ENCODE measurements at regions of chr7 and their contacts with region 1.

Region 1: GRCh38 chr7:31735991-31736982 is 49.3 kb downstream of the PPP1R17 start:
- DNase-seq: peak; percentile 57 to 69 (median 64)
- ATAC-seq: peak; percentile 90
- H3K4me3 ChIP-seq: no peak overlapping the region
- H3K27ac ChIP-seq: no peak overlapping the region
- H3K4me1 ChIP-seq: no peaks in the 10 kb centered on the region
- H3K27me3 ChIP-seq: no peaks in the 10 kb centered on the region; a peak in 2 of 5 replicates
- CTCF ChIP-seq: peak; percentile 72 to 87 (median 85)
- EP300 ChIP-seq: no peak
- POLR2A ChIP-seq: no peak
- RAD21 ChIP-seq: peak; percentile 72 to 76

Region 2: GRCh38 chr7:30983042-30983913 is 753.0 kb before region 1 on chr7:
- CTCF ChIA-PET with region 1: no interaction called
- POLR2A ChIA-PET with region 1: no interaction called
- in situ Hi-C with region 1: loop called (anchors 10 kb)
- intact Hi-C with region 1: no loop called
- DNase-seq: peak; percentile 80 to 87 (median 86)
- ATAC-seq: peak; percentile 96
- H3K4me3 ChIP-seq: no peak overlapping the region
- H3K27ac ChIP-seq: no peak overlapping the region
- H3K4me1 ChIP-seq: peaks cover 0 to 4% of the 10 kb centered on the region in 2 experiments; a peak in 1 of 5 replicates
- H3K27me3 ChIP-seq: peaks cover 37 to 61% of the 10 kb centered on the region in 2 experiments
- CTCF ChIP-seq: peak; percentile 87 to 94 (median 90)
- EP300 ChIP-seq: no peak
- POLR2A ChIP-seq: no peak
- RAD21 ChIP-seq: peak; percentile 68 to 93

Region 3: DNA sequence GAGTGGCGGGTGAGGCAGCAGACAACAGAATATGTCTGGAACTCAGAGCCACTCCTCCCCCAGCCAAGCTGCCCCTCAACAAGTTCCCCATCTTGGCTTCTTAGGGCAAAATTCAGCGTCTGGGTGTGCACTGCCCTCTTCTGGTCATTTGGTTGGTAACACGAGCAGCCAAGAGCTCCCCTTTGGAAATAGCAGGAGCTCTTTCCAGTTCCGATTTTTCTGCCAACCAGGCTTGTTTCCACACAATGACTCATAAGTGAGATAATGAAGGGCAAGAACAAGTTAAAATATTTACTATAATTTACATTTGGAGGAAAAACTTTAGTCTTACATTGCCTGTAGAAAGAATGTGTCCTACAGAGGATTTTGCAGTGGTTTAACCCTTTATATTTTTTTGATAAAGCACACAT is 613.6 kb before region 1 on chr7:
- CTCF ChIA-PET with region 1: interaction called, 3 read pairs
- POLR2A ChIA-PET with region 1: no interaction called
- in situ Hi-C with region 1: loop called (anchors 5 kb)
- intact Hi-C with region 1: no loop called
- DNase-seq: peak; percentile 59 to 77 (median 74)
- ATAC-seq: peak; percentile 94
- H3K4me3 ChIP-seq: no peak overlapping the region
- H3K27ac ChIP-seq: no peak overlapping the region
- H3K4me1 ChIP-seq: no peaks in the 10 kb centered on the region
- H3K27me3 ChIP-seq: peaks cover 0 to 7% of the 10 kb centered on the region in 2 experiments; a peak in 3 of 5 replicates
- CTCF ChIP-seq: peak; percentile 85 to 92 (median 86)
- EP300 ChIP-seq: no peak
- POLR2A ChIP-seq: no peak
- RAD21 ChIP-seq: peak; percentile 77 to 86

Region 4: GRCh38 chr7:31134246-31135188 is 601.8 kb before region 1 on chr7:
- CTCF ChIA-PET with region 1: interaction called, 8 read pairs
- POLR2A ChIA-PET with region 1: interaction called, 3 read pairs
- in situ Hi-C with region 1: loop called (anchors 5 kb)
- intact Hi-C with region 1: loop called (anchors 2 kb)
- DNase-seq: peak; percentile 69 to 82 (median 74)
- ATAC-seq: peak; percentile 99
- H3K4me3 ChIP-seq: no peak overlapping the region
- H3K27ac ChIP-seq: no peak overlapping the region
- H3K4me1 ChIP-seq: no peaks in the 10 kb centered on the region
- H3K27me3 ChIP-seq: peaks cover 0 to 4% of the 10 kb centered on the region in 2 experiments; a peak in 3 of 5 replicates
- CTCF ChIP-seq: peak; percentile 69 to 80 (median 78)
- EP300 ChIP-seq: no peak
- POLR2A ChIP-seq: no peak
- RAD21 ChIP-seq: peak; percentile 51 to 76

Region 5: DNA sequence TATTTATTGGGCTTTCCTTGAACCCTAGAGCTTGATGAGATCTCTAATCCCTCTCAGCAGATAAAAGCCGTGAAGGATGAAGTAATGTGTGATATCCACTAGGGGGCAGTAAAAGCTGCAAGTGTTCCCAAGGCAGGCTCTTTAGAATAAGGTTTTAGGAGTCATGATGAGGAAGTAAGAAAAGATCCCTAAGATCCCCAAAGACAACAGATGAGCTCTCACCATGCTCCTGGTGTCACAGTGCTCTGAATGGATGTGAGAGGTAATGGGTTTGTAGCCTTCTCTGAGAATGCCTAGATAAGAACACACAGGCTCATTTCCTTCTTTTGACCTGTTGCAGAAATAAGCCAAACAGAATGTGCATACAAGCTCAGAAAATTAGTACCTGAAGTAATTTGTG is 292.8 kb before region 1 on chr7:
- CTCF ChIA-PET with region 1: interaction called, 9 read pairs
- POLR2A ChIA-PET with region 1: no interaction called
- in situ Hi-C with region 1: no loop called
- intact Hi-C with region 1: loop called (anchors 1 kb)
- DNase-seq: peak; percentile 53 to 63 (median 57)
- ATAC-seq: peak; percentile 89
- H3K4me3 ChIP-seq: no peak overlapping the region
- H3K27ac ChIP-seq: no peak overlapping the region
- H3K4me1 ChIP-seq: no peaks in the 10 kb centered on the region
- H3K27me3 ChIP-seq: no peaks in the 10 kb centered on the region
- CTCF ChIP-seq: peak; percentile 58 to 78 (median 76); a peak in 5 of 6 replicates
- EP300 ChIP-seq: no peak
- POLR2A ChIP-seq: no peak
- RAD21 ChIP-seq: peak; percentile 54 to 67

Region 6: DNA sequence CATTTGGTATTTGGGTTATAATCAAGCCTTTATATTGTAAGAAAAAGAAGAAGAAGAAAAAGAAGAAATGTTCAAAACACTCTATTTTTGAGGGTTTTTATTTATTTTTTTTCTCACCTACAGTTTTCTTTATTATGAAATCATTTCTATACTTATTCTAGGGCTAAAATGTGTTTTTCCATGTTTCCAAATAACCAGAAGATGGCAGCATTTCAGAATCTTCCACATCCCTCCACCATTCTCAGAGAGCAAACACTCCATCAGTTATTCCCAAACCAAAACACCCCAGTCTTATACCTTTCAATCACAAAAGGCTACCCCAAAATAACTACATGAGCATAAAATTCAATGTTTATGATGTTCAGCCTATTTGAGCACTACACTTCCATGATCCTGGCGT is 88.0 kb before region 1 on chr7:
- CTCF ChIA-PET with region 1: interaction called, 5 read pairs
- POLR2A ChIA-PET with region 1: no interaction called
- in situ Hi-C with region 1: no loop called
- intact Hi-C with region 1: loop called (anchors 2 kb)
- DNase-seq: no peak
- ATAC-seq: no peak
- H3K4me3 ChIP-seq: no peak overlapping the region
- H3K27ac ChIP-seq: no peak overlapping the region
- H3K4me1 ChIP-seq: no peaks in the 10 kb centered on the region
- H3K27me3 ChIP-seq: no peaks in the 10 kb centered on the region
- CTCF ChIP-seq: no peak; a peak in 1 of 6 replicates
- EP300 ChIP-seq: no peak
- POLR2A ChIP-seq: no peak
- RAD21 ChIP-seq: no peak

Measured in K562 (cell line).